ENCODE measurements at regions of chr7 and their contacts with region 1.

Region 1: GRCh38 chr7:99235925-99236324 is 28.0 kb upstream of the KPNA7 start:
- DNase-seq: no peak
- ATAC-seq: no peak
- H3K4me3 Mint-ChIP-seq: no peak overlapping the region
- H3K27ac Mint-ChIP-seq: no peak overlapping the region
- H3K4me1 Mint-ChIP-seq: no peaks in the 10 kb centered on the region
- H3K27me3 Mint-ChIP-seq: peaks cover 2% of the 10 kb centered on the region

Region 2: GRCh38 chr7:99040104-99040958 is 195.6 kb before region 1 on chr7:
- CTCF ChIA-PET with region 1: no interaction called
- POLR2A ChIA-PET with region 1: no interaction called
- intact Hi-C with region 1: loop called in 1 of 2 experiments (anchors 10 kb)
- DNase-seq: peak; percentile 75
- ATAC-seq: peak; percentile 79
- H3K4me3 Mint-ChIP-seq: no peak overlapping the region
- H3K27ac Mint-ChIP-seq: no peak overlapping the region
- H3K4me1 Mint-ChIP-seq: no peaks in the 10 kb centered on the region
- H3K27me3 Mint-ChIP-seq: no peaks in the 10 kb centered on the region

Region 3: GRCh38 chr7:99278177-99278576 is 42.3 kb after region 1 on chr7:
- CTCF ChIA-PET with region 1: interaction called, 4 read pairs
- POLR2A ChIA-PET with region 1: no interaction called
- intact Hi-C with region 1: loop called in 1 of 2 experiments (anchors 2 kb)
- DNase-seq: no peak
- ATAC-seq: no peak
- H3K4me3 Mint-ChIP-seq: no peak overlapping the region
- H3K27ac Mint-ChIP-seq: no peak overlapping the region
- H3K4me1 Mint-ChIP-seq: peaks cover 16% of the 10 kb centered on the region
- H3K27me3 Mint-ChIP-seq: peaks cover 4% of the 10 kb centered on the region